ENCODE measurements at regions of chr7 and their contacts with region 1.

Region 1: GRCh38 chr7:107201795-107202450 is 33.1 kb downstream of the HBP1 start:
- DNase-seq: peak; percentile 64
- H3K4me3 ChIP-seq: no peak overlapping the region
- H3K27ac ChIP-seq: 0 out of 4 replicates have a peak overlapping the region, but pooled peaks of 1 of the 2 experiments have one; percentile 34
- H3K4me1 ChIP-seq: no peaks in the 10 kb centered on the region; a peak in 1 of 4 replicates
- H3K27me3 ChIP-seq: no peaks in the 10 kb centered on the region
- CTCF ChIP-seq: peak; percentile 72
- EP300 ChIP-seq: no peak
- RAD21 ChIP-seq: peak; percentile 89

Region 2: DNA sequence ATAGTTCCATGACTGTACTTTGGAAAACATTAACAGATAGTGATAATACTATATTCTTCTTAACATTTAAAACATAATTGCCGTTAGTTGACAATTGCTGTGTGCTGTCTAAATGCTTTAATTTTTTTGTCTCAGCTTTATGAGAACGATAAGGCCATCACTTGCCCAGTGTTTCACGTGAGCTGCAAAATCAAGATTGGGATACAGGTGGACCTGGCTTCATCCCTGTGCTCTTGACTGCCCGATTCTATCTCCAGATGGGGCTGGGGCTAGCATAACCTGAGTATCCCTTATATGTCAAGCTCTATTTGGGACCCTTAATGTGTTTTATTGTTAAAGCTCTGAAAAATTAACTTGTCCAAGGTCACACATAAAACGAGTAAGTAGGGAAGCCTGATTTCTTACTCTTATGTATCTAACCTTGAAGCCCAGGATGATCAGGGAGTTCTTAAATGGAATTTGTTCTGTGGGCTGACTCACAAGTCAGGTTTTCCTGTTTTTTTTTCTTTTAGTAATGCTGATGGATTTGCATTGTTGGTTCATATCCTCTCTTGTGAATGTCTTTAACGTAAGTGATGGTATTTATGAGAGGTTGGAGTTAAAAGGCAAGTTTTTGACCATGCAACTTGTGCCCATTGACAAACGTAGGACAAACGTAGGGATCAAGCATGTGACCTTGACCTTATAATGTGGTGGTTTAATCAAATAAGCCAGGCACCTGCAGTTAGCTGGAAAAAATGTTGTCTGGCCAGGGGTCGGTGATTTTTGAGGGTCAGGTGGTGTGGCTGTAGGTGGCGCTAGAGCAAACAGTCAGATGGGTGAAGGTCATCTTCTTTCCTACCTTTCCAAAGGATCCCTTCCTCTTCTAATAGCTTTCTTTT is 153.8 kb before region 1 on chr7:
- CTCF ChIA-PET with region 1: no interaction called
- POLR2A ChIA-PET with region 1: no interaction called
- DNase-seq: peak; percentile 25
- H3K4me3 ChIP-seq: no peak overlapping the region
- H3K27ac ChIP-seq: peak overlapping the region; percentile 35 to 39; a peak in 3 of 4 replicates
- H3K4me1 ChIP-seq: peaks cover 12 to 42% of the 10 kb centered on the region in 2 experiments; a peak in 3 of 4 replicates
- H3K27me3 ChIP-seq: no peaks in the 10 kb centered on the region
- CTCF ChIP-seq: peak; percentile 52
- EP300 ChIP-seq: no peak; a peak in 1 of 4 replicates
- RAD21 ChIP-seq: no peak

Region 3: GRCh38 chr7:107142432-107142831 is 59.5 kb before region 1 on chr7:
- CTCF ChIA-PET with region 1: no interaction called
- POLR2A ChIA-PET with region 1: no interaction called
- DNase-seq: no peak
- H3K4me3 ChIP-seq: no peak overlapping the region
- H3K27ac ChIP-seq: no peak overlapping the region
- H3K4me1 ChIP-seq: no peaks in the 10 kb centered on the region; a peak in 1 of 4 replicates
- H3K27me3 ChIP-seq: no peaks in the 10 kb centered on the region
- CTCF ChIP-seq: no peak
- EP300 ChIP-seq: no peak
- RAD21 ChIP-seq: no peak

Region 4: DNA sequence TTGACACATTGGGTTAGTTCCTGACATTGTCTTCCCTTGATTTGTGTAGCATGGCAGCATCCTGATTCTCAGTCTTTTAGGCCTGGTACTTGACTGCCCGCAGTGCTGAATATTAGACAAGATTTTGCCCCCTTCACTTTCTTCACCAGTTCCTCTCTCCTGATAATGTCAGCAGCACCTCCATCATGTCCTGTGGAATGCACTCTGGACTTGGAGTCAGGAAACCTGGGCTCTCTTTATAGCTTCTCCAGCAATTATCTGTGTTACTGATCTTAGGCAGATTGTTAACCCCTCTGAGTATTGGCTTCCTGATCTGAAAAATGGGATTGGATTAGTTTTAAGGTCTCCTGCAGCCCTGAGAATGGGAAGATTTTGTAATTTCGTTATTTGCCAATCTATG is 14.1 kb before region 1 on chr7:
- CTCF ChIA-PET with region 1: interaction called, 15 read pairs
- POLR2A ChIA-PET with region 1: no interaction called
- DNase-seq: no peak
- H3K4me3 ChIP-seq: no peak overlapping the region
- H3K27ac ChIP-seq: no peak overlapping the region
- H3K4me1 ChIP-seq: no peaks in the 10 kb centered on the region; a peak in 1 of 4 replicates
- H3K27me3 ChIP-seq: no peaks in the 10 kb centered on the region
- CTCF ChIP-seq: no peak
- EP300 ChIP-seq: no peak
- RAD21 ChIP-seq: no peak

Region 5: DNA sequence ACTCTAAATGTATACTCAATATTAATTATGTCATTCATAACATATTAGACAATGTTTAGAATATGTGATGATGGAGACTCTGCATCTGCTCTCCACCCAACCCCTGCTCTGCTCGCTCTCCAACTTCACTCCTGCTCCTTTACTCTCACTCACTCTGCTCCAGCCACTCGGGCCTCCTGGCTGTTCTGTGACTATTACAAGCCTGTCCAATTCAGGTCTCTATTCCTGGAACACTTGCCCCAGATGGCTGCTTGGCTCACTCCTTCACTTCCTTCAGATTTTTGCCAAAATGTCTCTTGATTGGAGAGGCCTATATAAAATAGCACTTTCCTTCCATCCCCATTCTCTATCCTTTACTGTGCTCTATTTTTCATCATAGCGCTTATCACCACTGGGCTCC is 51.7 kb after region 1 on chr7:
- CTCF ChIA-PET with region 1: no interaction called
- POLR2A ChIA-PET with region 1: no interaction called
- DNase-seq: no peak
- H3K4me3 ChIP-seq: no peak overlapping the region
- H3K27ac ChIP-seq: no peak overlapping the region
- H3K4me1 ChIP-seq: no peaks in the 10 kb centered on the region; a peak in 1 of 4 replicates
- H3K27me3 ChIP-seq: no peaks in the 10 kb centered on the region
- CTCF ChIP-seq: no peak
- EP300 ChIP-seq: no peak
- RAD21 ChIP-seq: no peak

Region 6: GRCh38 chr7:107318523-107319160 is 116.7 kb after region 1 on chr7:
- CTCF ChIA-PET with region 1: no interaction called
- POLR2A ChIA-PET with region 1: no interaction called
- DNase-seq: no peak
- H3K4me3 ChIP-seq: no peak overlapping the region
- H3K27ac ChIP-seq: no peak overlapping the region
- H3K4me1 ChIP-seq: no peaks in the 10 kb centered on the region; a peak in 1 of 4 replicates
- H3K27me3 ChIP-seq: no peaks in the 10 kb centered on the region
- CTCF ChIP-seq: no peak
- EP300 ChIP-seq: no peak
- RAD21 ChIP-seq: no peak

Region 7: DNA sequence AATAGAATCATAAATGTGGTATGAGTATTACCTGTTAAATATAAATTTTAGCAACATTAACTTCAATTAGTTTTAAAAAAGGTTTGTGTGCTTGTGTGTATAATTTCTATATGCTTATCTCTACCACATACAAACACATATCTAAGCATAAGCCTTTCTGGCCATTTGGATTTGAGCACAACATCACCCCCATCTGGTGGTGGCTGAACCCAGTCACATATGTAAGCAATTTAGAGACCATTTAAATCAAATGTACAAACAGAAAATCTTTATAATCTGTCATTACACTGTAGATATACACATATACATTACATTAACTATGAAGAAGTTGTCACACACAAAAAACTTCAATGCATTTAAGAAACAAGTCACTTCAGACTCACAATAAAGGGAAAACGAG is 299.7 kb after region 1 on chr7:
- CTCF ChIA-PET with region 1: interaction called, 28 read pairs
- POLR2A ChIA-PET with region 1: no interaction called
- DNase-seq: peak; percentile 56
- H3K4me3 ChIP-seq: no peak overlapping the region
- H3K27ac ChIP-seq: no peak overlapping the region
- H3K4me1 ChIP-seq: peaks cover 0 to 2% of the 10 kb centered on the region in 2 experiments; a peak in 2 of 4 replicates
- H3K27me3 ChIP-seq: no peaks in the 10 kb centered on the region
- CTCF ChIP-seq: peak; percentile 70
- EP300 ChIP-seq: no peak
- RAD21 ChIP-seq: peak; percentile 83

Measured in SK-N-SH (cell line).